ENCODE measurements at regions of chr15 and their contacts with region 1.

Region 1: DNA sequence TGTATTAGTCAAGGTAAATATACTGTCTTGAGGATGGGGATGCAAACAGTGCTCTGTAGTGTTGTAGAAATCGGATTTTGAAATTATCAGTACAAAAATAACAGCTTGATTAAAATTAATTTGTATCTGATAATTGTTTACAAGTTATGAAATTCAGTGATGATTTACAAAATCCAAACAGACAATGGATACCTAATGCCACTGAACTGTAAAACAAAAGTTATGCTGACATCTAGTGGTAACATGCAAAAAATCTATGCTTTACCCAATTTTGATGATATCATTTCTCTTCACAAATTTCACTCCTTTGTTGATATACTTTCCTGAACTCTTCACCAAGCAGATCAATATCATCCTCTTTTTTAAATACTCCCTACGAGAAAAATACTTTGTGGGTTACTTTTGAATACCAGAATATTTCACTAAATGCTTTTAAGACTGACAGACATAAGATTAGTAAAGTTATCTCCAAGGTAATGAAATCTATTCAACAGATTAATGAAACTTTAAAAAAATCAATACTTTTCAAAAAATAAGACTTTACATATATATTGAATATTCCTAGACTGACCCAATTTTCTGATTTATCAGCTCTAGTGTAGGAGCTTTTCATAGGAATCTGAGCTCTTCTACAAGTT is 36.0 kb downstream of the MNS1 start:
- DNase-seq: no peak
- H3K4me3 ChIP-seq: no peak overlapping the region
- H3K27ac ChIP-seq: no peak overlapping the region
- H3K4me1 ChIP-seq: peaks cover 0 to 6% (median 0%) of the 10 kb centered on the region in 4 donors
- H3K27me3 ChIP-seq: no peaks in the 10 kb centered on the region
- CTCF ChIP-seq: peak; percentile 39 to 54 (median 46)
- EP300 ChIP-seq: no peak
- POLR2A ChIP-seq: no peak

Region 2: DNA sequence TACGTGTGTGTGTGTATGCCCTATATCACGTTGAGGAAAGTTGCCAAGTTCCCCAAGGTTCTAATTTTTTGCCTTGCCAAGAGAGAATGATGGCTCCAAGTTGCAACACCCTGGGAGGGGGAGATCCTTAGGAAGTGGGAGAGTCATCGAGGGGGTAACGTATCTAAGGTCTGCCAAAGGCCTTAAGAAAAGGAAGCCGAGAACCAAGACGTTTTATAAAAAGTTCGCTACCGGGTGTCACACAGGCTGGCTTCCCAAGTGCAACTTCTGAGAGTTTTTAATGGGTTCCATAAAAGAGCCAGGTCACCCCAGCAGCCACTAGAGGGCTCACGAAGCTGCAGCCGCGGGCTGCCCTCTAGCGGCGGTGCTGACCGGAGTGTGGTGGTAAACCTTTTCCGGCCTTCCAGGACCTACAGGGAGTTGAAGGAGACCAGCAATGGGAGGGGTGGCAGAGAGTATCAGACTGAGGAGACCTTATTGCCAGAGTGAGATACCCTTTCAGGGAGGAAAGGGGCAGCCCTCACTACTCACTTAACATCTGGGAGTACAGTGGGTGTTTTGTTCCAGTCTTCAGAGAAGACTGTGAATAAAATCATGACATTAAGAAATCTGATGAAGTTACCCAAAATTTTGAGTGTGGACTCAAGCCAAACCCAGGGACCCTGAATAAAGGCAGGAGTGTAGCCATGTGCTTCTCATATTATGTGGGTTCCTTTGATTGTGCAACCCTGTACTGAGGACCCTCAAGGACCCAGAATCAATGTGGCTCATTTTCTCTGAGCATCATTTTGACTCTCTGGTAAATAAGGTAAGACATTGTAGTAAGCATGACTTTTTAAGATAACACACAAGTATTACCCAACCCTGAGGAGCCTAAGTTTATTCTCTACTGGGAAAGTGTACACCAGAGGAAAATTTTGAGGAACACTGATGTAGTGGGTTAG is 182.8 kb before region 1 on chr15:
- in situ Hi-C with region 1: loop called in 2 of 4 experiments (anchors 10 kb)
- intact Hi-C with region 1: no loop called
- DNase-seq: peak; percentile 93
- H3K4me3 ChIP-seq: peak overlapping the region in 2 of 4 donors; percentile 15 to 44
- H3K27ac ChIP-seq: peak overlapping the region; percentile 62 to 95 (median 92)
- H3K4me1 ChIP-seq: peaks cover 8 to 52% (median 22%) of the 10 kb centered on the region in 4 donors
- H3K27me3 ChIP-seq: no peaks in the 10 kb centered on the region
- CTCF ChIP-seq: peak; percentile 99 to 100 (median 99)
- EP300 ChIP-seq: no peak
- POLR2A ChIP-seq: no peak

Region 3: DNA sequence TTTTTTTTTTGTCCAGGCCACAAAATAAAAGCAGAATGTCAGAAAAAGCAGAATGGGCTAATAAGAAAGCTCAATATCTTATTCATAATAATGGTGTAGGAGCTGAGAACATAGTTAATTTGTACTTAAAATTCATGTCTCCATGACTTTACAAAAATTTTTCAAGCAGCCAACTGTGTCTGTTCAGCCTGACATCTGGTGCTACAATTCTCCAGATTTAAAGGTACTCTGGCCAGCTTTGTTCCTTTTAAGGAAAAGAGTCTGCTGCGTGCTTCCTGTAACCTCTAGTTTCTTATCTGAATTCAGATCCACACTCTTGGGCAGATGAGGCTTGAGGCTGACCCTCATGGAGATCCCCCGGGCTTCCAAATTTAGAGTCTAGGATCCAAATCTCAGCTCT is 176.6 kb before region 1 on chr15:
- in situ Hi-C with region 1: loop called in 2 of 4 experiments (anchors 10 kb)
- intact Hi-C with region 1: no loop called
- DNase-seq: no peak
- H3K4me3 ChIP-seq: no peak overlapping the region
- H3K27ac ChIP-seq: no peak overlapping the region
- H3K4me1 ChIP-seq: peaks cover 0 to 15% (median 0%) of the 10 kb centered on the region in 4 donors
- H3K27me3 ChIP-seq: no peaks in the 10 kb centered on the region
- CTCF ChIP-seq: no peak
- EP300 ChIP-seq: no peak
- POLR2A ChIP-seq: no peak

Measured in transverse colon (tissue), 4 donors.